ENCODE measurements at regions of chr9 and their contacts with region 1.

Region 1: GRCh38 chr9:130480331-130481072 is 35.7 kb downstream of the ASS1 start:
- DNase-seq: no peak
- ATAC-seq: no peak
- H3K4me3 ChIP-seq: no peak overlapping the region
- H3K27ac ChIP-seq: no peak overlapping the region
- H3K4me1 ChIP-seq: no peaks in the 10 kb centered on the region
- H3K27me3 ChIP-seq: no peaks in the 10 kb centered on the region
- CTCF ChIP-seq: no peak
- POLR2A ChIP-seq: no peak

Region 2: DNA sequence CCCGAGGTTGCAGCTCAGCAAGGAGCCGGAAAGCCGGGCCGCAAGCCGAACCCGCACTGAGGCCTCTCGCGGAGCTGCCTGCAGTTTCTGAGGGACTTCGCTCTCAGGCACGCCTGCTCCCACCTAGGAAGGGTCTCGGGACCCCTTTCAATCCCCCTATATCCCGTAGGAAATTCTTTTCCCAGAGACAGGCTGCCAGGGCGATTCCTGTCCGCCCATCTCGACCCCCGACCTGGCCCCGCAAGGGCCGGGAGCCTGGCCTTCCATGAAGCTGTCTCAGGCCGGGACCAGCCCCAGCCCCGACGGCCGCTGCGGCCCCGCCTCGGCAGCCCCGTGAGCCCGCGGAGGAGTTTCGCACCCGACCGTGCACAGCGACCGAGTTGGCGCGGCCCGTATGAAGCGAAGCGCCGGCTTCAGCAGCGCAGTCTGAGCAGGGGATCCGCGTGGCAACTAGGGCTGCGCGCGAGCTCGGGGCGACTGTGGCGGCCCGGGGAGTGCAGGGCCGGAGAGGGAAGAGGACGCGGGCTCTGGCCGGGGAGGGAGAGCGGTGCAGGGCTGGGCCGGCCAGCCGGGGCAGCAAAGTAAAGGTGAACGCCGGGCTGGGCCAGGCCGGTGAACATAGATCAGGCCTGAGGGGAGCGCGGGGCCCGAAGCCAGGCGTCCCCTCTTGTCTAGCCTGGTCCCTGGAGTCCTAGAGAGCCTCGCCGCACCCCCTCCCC is 182.9 kb after region 1 on chr9:
- intact Hi-C with region 1: loop called in 1 of 10 experiments (anchors 10 kb)
- DNase-seq: no peak
- ATAC-seq: peak in 3 of 4 donors; percentile 12 to 32 (median 27)
- H3K4me3 ChIP-seq: peak overlapping the region in 5 of 12 donors; percentile 4 to 13 (median 12)
- H3K27ac ChIP-seq: no peak overlapping the region
- H3K4me1 ChIP-seq: peaks cover 2 to 75% (median 48%) of the 10 kb centered on the region in 12 donors
- H3K27me3 ChIP-seq: peaks cover 84 to 100% (median 97%) of the 10 kb centered on the region in 9 donors
- CTCF ChIP-seq: no peak
- POLR2A ChIP-seq: no peak

Measured in heart left ventricle (tissue), 16 donors.